Mammary epithelial cell (primary cell): ENCODE measurements at regions of chr15 and their contacts with region 1.

Region 1: GRCh38 chr15:70974004-70974832 is 81.6 kb downstream of the LRRC49 start:
- DNase-seq: peak; percentile 36
- H3K4me3 ChIP-seq: no peak overlapping the region
- H3K27ac ChIP-seq: no peak overlapping the region
- H3K4me1 ChIP-seq: no peaks in the 10 kb centered on the region
- H3K27me3 ChIP-seq: no peaks in the 10 kb centered on the region
- CTCF ChIP-seq: peak; percentile 16 to 49

Region 2: GRCh38 chr15:71011503-71012155 is 37.4 kb after region 1 on chr15:
- CTCF ChIA-PET with region 1: no interaction called
- dilution Hi-C with region 1: no loop called
- in situ Hi-C with region 1: no loop called
- intact Hi-C with region 1: no loop called
- DNase-seq: peak; percentile 57
- H3K4me3 ChIP-seq: no peak overlapping the region
- H3K27ac ChIP-seq: peak overlapping the region; percentile 46
- H3K4me1 ChIP-seq: peaks cover 15% of the 10 kb centered on the region
- H3K27me3 ChIP-seq: no peaks in the 10 kb centered on the region
- CTCF ChIP-seq: peak; percentile 91 to 95

Region 3: GRCh38 chr15:71103102-71103676 is 129.0 kb after region 1 on chr15:
- CTCF ChIA-PET with region 1: no interaction called
- dilution Hi-C with region 1: no loop called
- in situ Hi-C with region 1: no loop called
- intact Hi-C with region 1: loop called (anchors 1 kb)
- DNase-seq: peak; percentile 69
- H3K4me3 ChIP-seq: no peak overlapping the region
- H3K27ac ChIP-seq: peak overlapping the region; percentile 33
- H3K4me1 ChIP-seq: peaks cover 25% of the 10 kb centered on the region
- H3K27me3 ChIP-seq: no peaks in the 10 kb centered on the region
- CTCF ChIP-seq: peak; percentile 56 to 69

Region 4: GRCh38 chr15:71278989-71279756 is 305.0 kb after region 1 on chr15:
- CTCF ChIA-PET with region 1: no interaction called
- dilution Hi-C with region 1: no loop called
- in situ Hi-C with region 1: no loop called
- intact Hi-C with region 1: loop called (anchors 10 kb)
- DNase-seq: peak; percentile 97
- H3K4me3 ChIP-seq: no peak overlapping the region
- H3K27ac ChIP-seq: peak overlapping the region; percentile 92
- H3K4me1 ChIP-seq: peaks cover 73% of the 10 kb centered on the region
- H3K27me3 ChIP-seq: no peaks in the 10 kb centered on the region
- CTCF ChIP-seq: no peak

Region 5: GRCh38 chr15:71743861-71744382 is 769.7 kb after region 1 on chr15:
- CTCF ChIA-PET with region 1: interaction called, 18 read pairs
- dilution Hi-C with region 1: no loop called
- in situ Hi-C with region 1: no loop called
- intact Hi-C with region 1: loop called (anchors 10 kb)
- DNase-seq: peak; percentile 21
- H3K4me3 ChIP-seq: no peak overlapping the region
- H3K27ac ChIP-seq: no peak overlapping the region
- H3K4me1 ChIP-seq: peaks cover 27% of the 10 kb centered on the region
- H3K27me3 ChIP-seq: no peaks in the 10 kb centered on the region
- CTCF ChIP-seq: peak; percentile 57 to 71